OCI-LY7 (cell line): ENCODE measurements at regions of chr11 and their contacts with region 1.

Region 1: DNA sequence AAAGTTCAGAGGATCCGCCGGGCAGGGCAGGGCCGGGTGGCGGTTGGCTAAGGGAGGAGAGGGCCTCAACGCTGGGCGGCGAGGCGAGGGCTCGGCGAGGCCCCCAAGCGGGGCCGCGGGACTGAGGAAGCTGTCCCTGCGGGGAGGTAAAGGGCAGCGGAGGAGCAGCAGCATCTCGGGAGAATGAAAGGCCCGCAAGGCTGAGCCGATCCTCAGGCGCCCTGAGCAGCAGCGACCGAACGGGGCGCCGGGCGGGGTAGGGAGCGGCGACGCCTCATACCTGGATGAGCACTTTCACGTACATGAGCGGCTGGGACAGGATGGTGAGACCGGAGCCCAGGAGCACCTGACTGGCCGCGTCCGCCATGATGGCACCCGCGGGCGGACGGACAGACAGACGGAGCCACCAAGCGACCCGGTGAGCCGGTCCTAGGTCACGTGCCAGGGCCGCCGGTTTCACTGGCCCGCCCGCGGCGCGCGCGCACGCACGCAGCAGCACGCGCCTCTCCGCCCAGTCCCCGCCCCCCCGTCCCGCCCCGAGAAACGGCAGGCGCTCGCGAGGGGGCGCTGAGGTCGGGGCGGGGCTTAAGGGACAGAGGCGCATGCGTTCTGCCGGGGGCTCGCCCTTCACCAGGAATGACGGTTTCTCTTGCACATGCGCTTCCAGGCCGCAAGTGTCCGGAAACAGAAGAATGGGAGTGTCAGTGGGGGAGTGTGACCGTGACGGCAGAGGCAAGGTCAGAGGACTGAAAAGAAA is at the start of gene MTCH2:
- DNase-seq: peak; percentile 98
- H3K4me3 ChIP-seq: peak within 1 kb of the TSS; percentile 89
- H3K27ac ChIP-seq: peak within 1 kb of the TSS; percentile 75
- H3K4me1 ChIP-seq: peaks cover 21% of the 10 kb centered on the region
- CTCF ChIP-seq: 0 out of 2 replicates have a peak, but pooled peaks have one; percentile 43
- total RNA-seq, gene MTCH2: 43.6 and 64.8 TPM in 2 replicates

Region 2: DNA sequence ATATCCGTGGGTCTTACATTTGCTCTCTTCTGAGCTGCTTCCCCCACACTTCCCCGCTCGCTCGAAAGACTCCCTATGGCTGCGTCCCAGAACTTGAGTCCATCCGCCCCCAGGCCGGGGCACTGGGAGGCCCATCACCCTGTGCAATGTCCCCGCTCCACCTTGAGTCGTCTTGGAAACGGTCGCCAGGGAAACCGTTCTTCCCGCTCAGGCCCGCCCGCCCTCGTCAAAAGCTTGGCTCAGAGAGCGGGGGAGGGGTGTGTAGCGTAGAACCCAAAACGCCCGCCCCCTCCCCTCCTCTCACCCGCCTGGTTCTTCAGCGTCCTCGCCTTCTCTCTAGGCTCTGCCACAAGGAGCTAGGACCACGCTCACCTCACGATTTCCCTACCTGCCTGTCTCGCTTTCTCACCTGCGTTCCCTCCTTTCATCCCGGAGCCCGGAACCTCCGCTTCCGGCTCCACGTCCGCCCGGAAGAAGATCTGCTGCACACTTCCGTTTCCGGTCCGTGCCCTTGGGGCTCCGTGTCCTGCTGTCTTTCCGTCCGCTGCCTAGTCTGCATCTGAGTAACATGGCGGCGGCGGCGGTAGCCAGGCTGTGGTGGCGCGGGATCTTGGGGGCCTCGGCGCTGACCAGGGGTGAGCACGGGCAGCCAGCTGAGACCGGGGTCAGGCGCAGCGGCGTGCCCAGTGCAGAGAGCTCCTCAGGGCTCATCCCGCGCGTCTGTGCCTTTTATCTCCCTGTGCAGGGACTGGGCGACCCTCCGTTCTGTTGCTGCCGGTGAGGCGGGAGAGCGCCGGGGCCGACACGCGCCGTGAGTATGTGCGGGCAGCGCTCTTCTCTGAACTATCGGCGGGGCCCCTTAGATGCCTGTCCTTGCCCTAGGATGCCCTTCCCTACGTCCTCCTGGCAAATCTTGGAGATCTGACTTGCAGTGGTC is 63.5 kb before region 1 on chr11 and contains the starts of genes KBTBD4 and NDUFS3:
- CTCF ChIA-PET with region 1: no interaction called
- POLR2A ChIA-PET with region 1: interaction called, 3 read pairs
- intact Hi-C with region 1: loop called (anchors 2 kb)
- DNase-seq: peak; percentile 94
- H3K4me3 ChIP-seq: peak within 1 kb of the TSS; percentile 85
- H3K27ac ChIP-seq: peak within 1 kb of the TSS; percentile 40
- H3K4me1 ChIP-seq: peaks cover 21% of the 10 kb centered on the region
- CTCF ChIP-seq: no peak
- total RNA-seq, gene KBTBD4: 25.2 and 25.8 TPM in 2 replicates
- total RNA-seq, gene NDUFS3: 73.9 and 92.7 TPM in 2 replicates

Region 3: GRCh38 chr11:47631473-47631872 is 10.8 kb before region 1 on chr11:
- CTCF ChIA-PET with region 1: no interaction called
- POLR2A ChIA-PET with region 1: no interaction called
- intact Hi-C with region 1: no loop called
- DNase-seq: no peak
- H3K4me3 ChIP-seq: no peak overlapping the region
- H3K27ac ChIP-seq: no peak overlapping the region
- H3K4me1 ChIP-seq: no peaks in the 10 kb centered on the region
- CTCF ChIP-seq: no peak

Region 4: DNA sequence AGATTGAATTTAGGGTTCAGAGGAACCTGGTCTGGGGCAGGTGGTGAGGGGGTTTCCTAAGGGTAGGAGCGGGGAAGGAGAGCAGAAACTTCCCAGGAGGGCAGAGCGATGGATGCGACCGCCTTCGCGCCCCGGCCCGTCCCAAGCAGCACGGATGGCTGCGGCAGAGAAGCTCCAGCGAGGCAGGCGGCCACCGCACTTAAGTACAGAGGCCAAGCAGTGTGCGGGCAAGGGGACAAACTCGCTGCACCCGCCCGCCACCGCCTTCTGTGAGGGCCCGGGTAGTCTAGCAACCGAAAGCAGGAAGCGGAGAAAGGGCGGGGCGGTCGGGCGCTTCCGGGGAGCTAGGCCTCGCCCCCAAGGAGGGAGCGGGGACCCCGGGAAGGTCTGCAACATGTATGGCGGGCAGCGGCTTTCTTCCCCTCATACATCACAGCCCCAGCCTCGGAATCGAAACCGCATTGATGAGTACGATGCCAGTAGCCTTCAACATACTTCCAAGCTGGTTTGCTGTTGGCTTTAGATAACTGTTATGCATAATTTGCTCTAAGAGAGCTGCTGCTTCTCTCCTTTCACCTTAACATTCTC is 72.9 kb after region 1 on chr11 and contains the start of gene AGBL2:
- CTCF ChIA-PET with region 1: no interaction called
- POLR2A ChIA-PET with region 1: interaction called, 4 read pairs
- intact Hi-C with region 1: loop called (anchors 2 kb)
- DNase-seq: peak; percentile 85
- H3K4me3 ChIP-seq: peak within 1 kb of the TSS; percentile 69
- H3K27ac ChIP-seq: peak within 1 kb of the TSS; percentile 43
- H3K4me1 ChIP-seq: peaks cover 16% of the 10 kb centered on the region
- CTCF ChIP-seq: no peak
- total RNA-seq, gene AGBL2: 2.0 and 5.9 TPM in 2 replicates

Region 5: DNA sequence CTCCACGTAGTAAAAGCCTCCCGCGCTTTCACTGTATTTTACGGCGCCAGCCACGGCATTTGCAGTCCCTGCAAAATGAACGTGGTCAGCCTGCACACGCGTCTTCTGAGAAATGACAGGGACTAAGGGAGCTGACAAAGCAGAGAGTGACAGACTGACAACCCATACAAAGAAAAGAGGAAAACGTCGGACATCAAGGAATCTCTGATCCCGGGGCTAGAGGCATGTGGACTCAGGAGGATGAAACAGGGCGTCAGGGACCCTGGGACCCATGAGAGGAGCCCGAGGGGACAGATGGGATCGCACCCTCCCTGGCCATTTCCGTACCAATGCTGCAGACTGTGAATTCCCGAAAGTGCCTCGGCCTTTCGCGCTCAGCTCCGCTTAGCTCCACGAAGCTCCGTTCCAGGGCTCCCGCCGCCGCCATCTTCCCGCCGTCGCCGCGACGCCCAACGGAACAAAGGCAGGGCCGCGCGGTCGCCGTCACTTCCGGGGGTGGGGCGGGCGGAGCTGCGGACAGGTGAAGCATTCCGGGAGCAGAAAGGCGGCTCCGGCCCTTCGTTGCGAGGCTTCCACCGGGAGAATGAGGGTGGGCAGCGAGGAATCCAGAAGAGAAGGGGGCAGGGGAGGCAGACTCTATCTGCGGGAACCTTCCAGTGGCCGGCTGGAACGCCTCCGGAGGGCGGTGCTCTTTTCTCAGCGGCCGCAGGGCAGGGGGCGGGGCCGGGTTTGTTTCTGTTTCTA is 205.8 kb after region 1 on chr11 and contains the start of gene NUP160:
- CTCF ChIA-PET with region 1: no interaction called
- POLR2A ChIA-PET with region 1: interaction called, 3 read pairs
- intact Hi-C with region 1: loop called (anchors 1 kb)
- DNase-seq: peak; percentile 76
- H3K4me3 ChIP-seq: peak within 1 kb of the TSS; percentile 94
- H3K27ac ChIP-seq: peak within 1 kb of the TSS; percentile 59
- H3K4me1 ChIP-seq: peaks cover 50% of the 10 kb centered on the region
- CTCF ChIP-seq: no peak
- total RNA-seq, gene NUP160: 23.9 and 32.0 TPM in 2 replicates

Region 6: GRCh38 chr11:48116437-48117228 is 474.4 kb after region 1 on chr11:
- CTCF ChIA-PET with region 1: no interaction called
- POLR2A ChIA-PET with region 1: interaction called, 4 read pairs
- intact Hi-C with region 1: loop called (anchors 10 kb)
- DNase-seq: peak; percentile 45
- H3K4me3 ChIP-seq: no peak overlapping the region
- H3K27ac ChIP-seq: no peak overlapping the region
- H3K4me1 ChIP-seq: peaks cover 4% of the 10 kb centered on the region
- CTCF ChIP-seq: peak; percentile 76